Naive thymus-derived CD4-positive, alpha-beta T cell (primary cell): ENCODE measurements at regions of chr5 and their contacts with region 1.

Region 1: GRCh38 chr5:108345541-108346171 is 36.2 kb downstream of the FBXL17 start:
- DNase-seq: peak in 6 of 9 donors; percentile 10 to 53 (median 38)
- ATAC-seq: peak; percentile 72
- H3K4me3 ChIP-seq: no peak overlapping the region
- H3K4me3 Mint-ChIP-seq: no peak overlapping the region
- H3K27ac ChIP-seq: no peak overlapping the region
- H3K27ac Mint-ChIP-seq: no peak overlapping the region
- H3K4me1 ChIP-seq: no peaks in the 10 kb centered on the region
- H3K4me1 Mint-ChIP-seq: peaks cover 0 to 11% (median 0%) of the 10 kb centered on the region in 7 donors
- H3K27me3 ChIP-seq: no peaks in the 10 kb centered on the region
- H3K27me3 Mint-ChIP-seq: no peaks in the 10 kb centered on the region

Region 2: DNA sequence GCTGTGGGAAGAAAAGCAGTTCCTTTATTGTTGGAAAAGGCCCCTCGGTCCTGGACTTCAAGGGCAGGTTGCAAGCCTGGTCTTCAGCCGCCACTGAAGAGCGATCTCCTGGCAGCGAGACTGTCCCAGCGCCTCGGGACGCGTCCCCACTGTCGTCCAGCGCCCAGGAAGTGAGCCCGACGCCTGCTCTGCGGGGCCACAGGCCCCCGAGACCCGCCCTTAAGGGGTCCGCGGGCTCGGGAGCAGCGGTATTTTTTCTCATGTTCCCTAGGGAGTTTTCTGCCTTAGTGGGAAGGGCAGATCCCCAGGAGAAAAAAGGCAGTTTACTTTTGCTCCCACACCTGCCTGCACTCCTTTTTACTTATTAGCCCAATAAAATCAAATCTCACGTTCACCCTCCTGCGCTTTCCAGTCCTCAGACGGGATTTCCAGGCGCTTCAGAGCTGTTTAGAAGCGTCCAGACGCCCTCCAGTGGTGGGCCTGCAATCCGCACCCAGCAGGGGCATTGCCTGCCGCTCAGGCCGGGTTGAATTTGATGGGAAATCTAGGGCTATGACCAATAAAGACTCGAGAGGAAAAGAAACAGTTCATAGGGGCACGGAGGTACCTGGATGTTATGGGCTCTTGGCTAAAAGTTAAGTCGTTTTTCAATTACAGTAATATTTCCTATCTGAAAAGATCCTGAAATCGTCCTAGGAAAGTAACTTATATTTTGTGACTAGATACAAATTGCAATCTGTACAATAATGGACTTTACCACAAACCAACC is 672.1 kb before region 1 on chr5:
- CTCF ChIA-PET with region 1: interaction called, 3 read pairs
- POLR2A ChIA-PET with region 1: no interaction called
- intact Hi-C with region 1: loop called (anchors 2 to 5 kb)
- DNase-seq: peak; percentile 22 to 73 (median 43)
- ATAC-seq: peak; percentile 82
- H3K4me3 ChIP-seq: peak overlapping the region; percentile 60
- H3K4me3 Mint-ChIP-seq: peak overlapping the region; percentile 71 to 94 (median 86)
- H3K27ac ChIP-seq: no peak overlapping the region
- H3K27ac Mint-ChIP-seq: no peak overlapping the region
- H3K4me1 ChIP-seq: peaks cover 11 to 19% of the 10 kb centered on the region in 2 donors
- H3K4me1 Mint-ChIP-seq: peaks cover 14 to 36% (median 28%) of the 10 kb centered on the region in 7 donors
- H3K27me3 ChIP-seq: peaks cover 5 to 10% of the 10 kb centered on the region in 2 donors
- H3K27me3 Mint-ChIP-seq: peaks cover 62 to 75% (median 67%) of the 10 kb centered on the region in 5 donors

Region 3: DNA sequence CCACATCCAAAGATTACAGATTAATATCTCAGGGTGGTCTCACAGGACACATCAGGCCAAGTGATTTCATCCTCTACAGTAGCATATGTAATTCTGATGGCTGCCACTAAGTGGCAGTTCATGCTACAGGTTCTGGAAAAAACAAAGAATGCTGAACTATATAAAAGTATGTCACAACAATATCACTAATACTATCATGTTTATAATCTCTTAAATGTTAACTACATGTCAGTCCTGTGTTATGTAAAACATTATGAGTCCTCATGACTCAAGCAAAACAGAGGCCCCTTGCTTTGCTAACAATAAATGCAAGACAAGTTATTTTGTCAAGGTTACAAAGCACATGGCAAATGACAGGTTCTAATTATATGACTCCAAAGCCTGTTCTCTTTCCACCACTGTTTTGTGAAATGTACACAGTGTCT is 196.9 kb before region 1 on chr5:
- CTCF ChIA-PET with region 1: no interaction called
- POLR2A ChIA-PET with region 1: no interaction called
- intact Hi-C with region 1: loop called (anchors 1 to 2 kb)
- DNase-seq: no peak
- ATAC-seq: no peak
- H3K4me3 ChIP-seq: no peak overlapping the region
- H3K4me3 Mint-ChIP-seq: no peak overlapping the region
- H3K27ac ChIP-seq: no peak overlapping the region
- H3K27ac Mint-ChIP-seq: no peak overlapping the region
- H3K4me1 ChIP-seq: no peaks in the 10 kb centered on the region
- H3K4me1 Mint-ChIP-seq: peaks cover 0 to 14% (median 4%) of the 10 kb centered on the region in 7 donors
- H3K27me3 ChIP-seq: no peaks in the 10 kb centered on the region
- H3K27me3 Mint-ChIP-seq: no peaks in the 10 kb centered on the region

Region 4: DNA sequence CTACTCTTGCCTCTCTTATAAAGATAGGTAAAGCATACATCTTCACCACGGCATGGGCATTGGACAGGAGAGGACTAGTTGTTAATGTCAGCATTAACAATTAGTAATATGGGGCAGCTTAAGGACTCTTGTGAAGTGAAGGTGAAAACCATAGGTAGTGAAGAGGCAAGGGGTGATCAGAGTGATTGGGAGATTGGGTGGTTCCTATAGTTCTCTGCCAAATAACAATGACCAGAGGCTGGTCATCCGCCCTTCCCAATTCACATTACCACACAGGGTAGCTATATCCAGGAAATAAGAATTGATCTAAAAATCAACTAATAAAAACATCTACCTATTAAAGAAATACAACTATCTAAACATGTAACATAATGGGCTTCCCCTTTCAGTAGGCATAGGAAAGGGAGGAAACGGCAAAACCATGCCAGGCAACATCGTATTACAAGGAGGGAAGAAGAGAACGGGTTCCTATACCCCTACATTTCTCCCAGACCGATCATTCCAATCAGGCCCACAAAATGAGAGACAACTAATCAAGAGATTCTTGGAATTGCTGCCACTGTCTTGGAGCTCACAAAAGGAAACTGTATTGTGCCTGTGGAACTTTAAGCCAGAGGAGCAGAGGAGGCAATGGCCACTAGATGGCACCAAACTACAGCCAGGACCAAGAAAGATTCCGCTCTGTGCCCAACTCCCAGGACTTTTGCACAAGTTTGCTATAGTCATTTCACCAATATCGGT is 85.4 kb before region 1 on chr5:
- CTCF ChIA-PET with region 1: interaction called, 43 read pairs
- POLR2A ChIA-PET with region 1: interaction called, 4 read pairs
- intact Hi-C with region 1: loop called (anchors 1 kb)
- DNase-seq: peak; percentile 22 to 62 (median 52)
- ATAC-seq: peak; percentile 81
- H3K4me3 ChIP-seq: no peak overlapping the region
- H3K4me3 Mint-ChIP-seq: peak overlapping the region in 4 of 10 donors; percentile 49 to 63 (median 56)
- H3K27ac ChIP-seq: no peak overlapping the region
- H3K27ac Mint-ChIP-seq: peak overlapping the region in 2 of 9 donors; percentile 19
- H3K4me1 ChIP-seq: no peaks in the 10 kb centered on the region
- H3K4me1 Mint-ChIP-seq: peaks cover 5 to 18% (median 8%) of the 10 kb centered on the region in 7 donors
- H3K27me3 ChIP-seq: no peaks in the 10 kb centered on the region
- H3K27me3 Mint-ChIP-seq: no peaks in the 10 kb centered on the region